ENCODE measurements at regions of chr4 and their contacts with region 1.

Region 1: DNA sequence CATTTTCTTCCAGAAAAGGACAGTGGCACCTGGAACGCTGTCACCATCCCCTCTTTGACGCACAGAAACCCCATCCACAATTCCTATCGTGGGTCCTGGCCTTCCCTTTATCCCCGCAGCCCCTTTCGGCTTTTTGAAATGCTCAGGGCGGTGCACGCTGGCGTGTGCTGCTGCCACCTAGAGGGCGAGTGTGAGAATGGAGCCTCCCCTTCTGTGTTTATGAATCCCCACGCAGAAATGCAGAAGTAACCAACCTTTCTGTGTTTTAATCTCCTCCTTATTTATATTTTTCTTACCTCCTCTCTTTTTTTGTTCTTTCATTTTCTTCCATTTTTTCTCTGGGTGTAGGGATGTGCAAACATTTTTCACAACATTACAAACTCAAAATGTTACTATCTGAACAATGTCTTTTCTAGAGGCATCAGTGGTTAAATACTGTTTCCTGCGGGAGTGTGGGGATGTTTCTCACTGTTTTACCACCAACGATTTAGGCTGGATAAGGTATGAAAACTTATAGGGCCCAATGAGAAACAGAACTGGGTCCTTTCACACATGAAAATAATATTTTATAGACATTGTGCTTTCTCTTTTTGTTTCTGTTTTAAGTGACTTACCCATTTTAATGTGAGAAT is 50.0 kb downstream of the TMA16 start:
- DNase-seq: peak; percentile 26 to 81 (median 49)
- ATAC-seq: peak; percentile 91
- H3K4me3 ChIP-seq: peak overlapping the region; percentile 33
- H3K4me3 Mint-ChIP-seq: no peak overlapping the region
- H3K27ac ChIP-seq: no peak overlapping the region
- H3K27ac Mint-ChIP-seq: no peak overlapping the region
- H3K4me1 ChIP-seq: peaks cover 3% of the 10 kb centered on the region
- H3K4me1 Mint-ChIP-seq: peaks cover 12% of the 10 kb centered on the region
- H3K27me3 ChIP-seq: no peaks in the 10 kb centered on the region
- H3K27me3 Mint-ChIP-seq: no peaks in the 10 kb centered on the region
- CTCF ChIP-seq: peak; percentile 99

Region 2: GRCh38 chr4:162497564-162498167 is 1046.9 kb before region 1 on chr4:
- CTCF ChIA-PET with region 1: interaction called, 5 read pairs
- POLR2A ChIA-PET with region 1: no interaction called
- intact Hi-C with region 1: loop called (anchors 1 to 5 kb)
- DNase-seq: peak in 3 of 14 experiments; percentile 38 to 54 (median 52)
- ATAC-seq: peak; percentile 52
- H3K4me3 ChIP-seq: no peak overlapping the region
- H3K4me3 Mint-ChIP-seq: no peak overlapping the region
- H3K27ac ChIP-seq: no peak overlapping the region
- H3K27ac Mint-ChIP-seq: no peak overlapping the region
- H3K4me1 ChIP-seq: no peaks in the 10 kb centered on the region
- H3K4me1 Mint-ChIP-seq: no peaks in the 10 kb centered on the region
- H3K27me3 ChIP-seq: no peaks in the 10 kb centered on the region
- H3K27me3 Mint-ChIP-seq: peaks cover 10% of the 10 kb centered on the region
- CTCF ChIP-seq: peak; percentile 72

Region 3: GRCh38 chr4:163048447-163048846 is 496.1 kb before region 1 on chr4:
- CTCF ChIA-PET with region 1: no interaction called
- POLR2A ChIA-PET with region 1: no interaction called
- intact Hi-C with region 1: loop called (anchors 2 to 5 kb)
- DNase-seq: peak in 4 of 14 experiments; percentile 5 to 34 (median 13)
- ATAC-seq: no peak
- H3K4me3 ChIP-seq: no peak overlapping the region
- H3K4me3 Mint-ChIP-seq: no peak overlapping the region
- H3K27ac ChIP-seq: no peak overlapping the region
- H3K27ac Mint-ChIP-seq: no peak overlapping the region
- H3K4me1 ChIP-seq: no peaks in the 10 kb centered on the region
- H3K4me1 Mint-ChIP-seq: no peaks in the 10 kb centered on the region
- H3K27me3 ChIP-seq: no peaks in the 10 kb centered on the region
- H3K27me3 Mint-ChIP-seq: peaks cover 3% of the 10 kb centered on the region
- CTCF ChIP-seq: peak; percentile 27

Region 4: DNA sequence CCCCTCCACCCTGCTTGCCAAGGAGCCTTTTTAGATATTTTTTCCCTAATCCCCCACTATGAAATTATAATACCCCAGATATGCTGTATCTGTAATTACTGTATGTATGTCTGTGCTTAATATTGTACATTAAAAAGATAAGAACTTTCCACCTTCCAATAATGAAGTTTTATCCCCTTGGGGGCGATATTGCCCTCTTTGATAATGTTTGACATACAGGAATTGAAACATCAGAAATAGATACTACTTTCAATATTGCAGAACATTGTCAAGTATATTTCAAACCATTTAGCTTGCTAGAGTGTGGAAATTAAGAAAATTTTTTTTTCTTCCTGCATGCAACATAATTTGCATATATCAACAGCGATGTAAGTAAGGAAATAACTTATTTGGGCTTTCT is 436.8 kb before region 1 on chr4:
- CTCF ChIA-PET with region 1: no interaction called
- POLR2A ChIA-PET with region 1: no interaction called
- intact Hi-C with region 1: loop called in 1 of 2 experiments (anchors 2 kb)
- DNase-seq: peak in 3 of 14 experiments; percentile 11
- ATAC-seq: no peak
- H3K4me3 ChIP-seq: no peak overlapping the region
- H3K4me3 Mint-ChIP-seq: no peak overlapping the region
- H3K27ac ChIP-seq: no peak overlapping the region
- H3K27ac Mint-ChIP-seq: no peak overlapping the region
- H3K4me1 ChIP-seq: no peaks in the 10 kb centered on the region
- H3K4me1 Mint-ChIP-seq: no peaks in the 10 kb centered on the region
- H3K27me3 ChIP-seq: no peaks in the 10 kb centered on the region
- H3K27me3 Mint-ChIP-seq: no peaks in the 10 kb centered on the region
- CTCF ChIP-seq: no peak

Region 5: DNA sequence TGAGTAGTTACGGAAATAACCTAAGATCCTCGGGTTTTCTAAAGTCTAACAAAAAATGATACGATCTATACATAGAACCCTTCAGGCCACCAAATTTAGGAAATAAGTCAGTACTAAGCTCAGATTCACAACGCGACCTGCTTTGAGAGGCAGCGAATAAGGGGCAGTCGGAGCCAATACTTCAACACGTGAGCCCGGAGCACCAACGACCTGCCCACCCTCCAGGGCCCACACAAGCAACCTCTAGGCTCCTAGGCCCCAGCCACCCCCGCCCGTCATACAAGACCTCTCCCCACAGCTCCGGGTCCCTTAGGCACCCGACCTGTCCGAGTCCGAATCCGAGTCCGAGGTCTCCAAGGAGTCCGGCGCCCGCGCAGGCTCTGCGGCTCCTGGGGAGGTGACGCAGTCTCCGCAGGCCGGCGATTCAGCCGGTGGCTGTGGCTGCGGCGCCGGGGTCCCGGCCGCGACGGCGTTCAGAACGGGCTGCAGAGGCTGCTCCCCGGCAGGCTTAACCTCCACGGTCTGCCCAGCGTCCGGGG is 378.4 kb before region 1 on chr4:
- CTCF ChIA-PET with region 1: no interaction called
- POLR2A ChIA-PET with region 1: no interaction called
- intact Hi-C with region 1: loop called in 1 of 2 experiments (anchors 5 kb)
- DNase-seq: peak; percentile 23 to 78 (median 43)
- ATAC-seq: peak; percentile 61
- H3K4me3 ChIP-seq: peak overlapping the region; percentile 87
- H3K4me3 Mint-ChIP-seq: peak overlapping the region; percentile 87
- H3K27ac ChIP-seq: peak overlapping the region; percentile 86 to 96
- H3K27ac Mint-ChIP-seq: peak overlapping the region; percentile 100
- H3K4me1 ChIP-seq: peaks cover 17% of the 10 kb centered on the region
- H3K4me1 Mint-ChIP-seq: peaks cover 49% of the 10 kb centered on the region
- H3K27me3 ChIP-seq: no peaks in the 10 kb centered on the region
- H3K27me3 Mint-ChIP-seq: no peaks in the 10 kb centered on the region
- CTCF ChIP-seq: no peak

Region 6: DNA sequence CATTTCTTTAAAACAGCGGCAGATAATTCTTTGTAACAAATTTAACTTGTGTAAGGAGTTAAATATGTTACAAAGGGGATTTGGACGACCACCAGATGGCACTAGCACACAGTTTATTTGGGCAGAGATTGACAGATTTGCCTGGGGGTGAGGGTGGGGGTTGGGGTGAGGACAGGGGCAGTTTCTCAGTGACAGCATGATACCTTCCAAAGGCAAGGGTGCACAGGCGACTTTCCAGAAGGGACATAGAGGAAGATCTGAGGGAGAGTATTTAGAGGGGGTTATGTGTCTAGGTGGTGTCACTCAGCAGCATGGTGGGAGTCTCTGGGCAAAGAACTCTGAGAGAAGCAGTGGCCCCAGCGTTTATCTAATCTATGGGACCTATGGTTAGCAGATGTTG is 59.6 kb before region 1 on chr4:
- CTCF ChIA-PET with region 1: interaction called, 9 read pairs
- POLR2A ChIA-PET with region 1: no interaction called
- intact Hi-C with region 1: loop called (anchors 1 to 2 kb)
- DNase-seq: peak; percentile 14 to 77 (median 39)
- ATAC-seq: peak; percentile 60
- H3K4me3 ChIP-seq: no peak overlapping the region
- H3K4me3 Mint-ChIP-seq: no peak overlapping the region
- H3K27ac ChIP-seq: no peak overlapping the region
- H3K27ac Mint-ChIP-seq: no peak overlapping the region
- H3K4me1 ChIP-seq: no peaks in the 10 kb centered on the region
- H3K4me1 Mint-ChIP-seq: no peaks in the 10 kb centered on the region
- H3K27me3 ChIP-seq: no peaks in the 10 kb centered on the region
- H3K27me3 Mint-ChIP-seq: peaks cover 11% of the 10 kb centered on the region
- CTCF ChIP-seq: peak; percentile 71

Region 7: GRCh38 chr4:163591614-163592020 is 47.1 kb after region 1 on chr4:
- CTCF ChIA-PET with region 1: no interaction called
- POLR2A ChIA-PET with region 1: no interaction called
- intact Hi-C with region 1: no loop called
- DNase-seq: peak in 2 of 14 experiments; percentile 20 to 22
- ATAC-seq: no peak
- H3K4me3 ChIP-seq: no peak overlapping the region
- H3K4me3 Mint-ChIP-seq: no peak overlapping the region
- H3K27ac ChIP-seq: no peak overlapping the region
- H3K27ac Mint-ChIP-seq: no peak overlapping the region
- H3K4me1 ChIP-seq: no peaks in the 10 kb centered on the region
- H3K4me1 Mint-ChIP-seq: peaks cover 16% of the 10 kb centered on the region
- H3K27me3 ChIP-seq: no peaks in the 10 kb centered on the region
- H3K27me3 Mint-ChIP-seq: no peaks in the 10 kb centered on the region
- CTCF ChIP-seq: no peak